ENCODE measurements at regions of chr15 and their contacts with region 1.

Region 1: DNA sequence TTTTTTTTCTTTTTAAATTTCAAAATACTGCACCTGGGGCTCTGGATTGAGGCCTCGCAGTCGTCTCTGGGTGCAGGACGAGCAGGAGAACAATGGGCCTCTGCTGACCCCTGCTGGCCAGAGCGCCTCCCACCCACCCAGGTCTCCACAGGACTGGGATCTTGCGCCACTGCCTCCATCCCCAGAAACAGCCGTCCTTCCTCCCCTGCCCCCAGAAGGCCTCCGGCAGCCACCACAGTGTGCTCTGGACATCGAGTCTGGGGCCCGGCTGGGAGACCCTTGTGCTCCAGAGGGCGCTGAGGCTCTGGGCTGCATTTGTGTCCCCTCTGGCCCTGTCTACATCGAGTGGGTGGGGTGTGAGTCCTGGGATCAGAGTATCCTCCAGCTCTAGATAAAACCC is 6.6 kb upstream of the ACSBG1 start:
- DNase-seq: peak; percentile 92
- H3K4me3 Mint-ChIP-seq: no peak overlapping the region
- H3K27ac Mint-ChIP-seq: no peak overlapping the region
- H3K4me1 Mint-ChIP-seq: no peaks in the 10 kb centered on the region
- H3K27me3 Mint-ChIP-seq: no peaks in the 10 kb centered on the region

Region 2: DNA sequence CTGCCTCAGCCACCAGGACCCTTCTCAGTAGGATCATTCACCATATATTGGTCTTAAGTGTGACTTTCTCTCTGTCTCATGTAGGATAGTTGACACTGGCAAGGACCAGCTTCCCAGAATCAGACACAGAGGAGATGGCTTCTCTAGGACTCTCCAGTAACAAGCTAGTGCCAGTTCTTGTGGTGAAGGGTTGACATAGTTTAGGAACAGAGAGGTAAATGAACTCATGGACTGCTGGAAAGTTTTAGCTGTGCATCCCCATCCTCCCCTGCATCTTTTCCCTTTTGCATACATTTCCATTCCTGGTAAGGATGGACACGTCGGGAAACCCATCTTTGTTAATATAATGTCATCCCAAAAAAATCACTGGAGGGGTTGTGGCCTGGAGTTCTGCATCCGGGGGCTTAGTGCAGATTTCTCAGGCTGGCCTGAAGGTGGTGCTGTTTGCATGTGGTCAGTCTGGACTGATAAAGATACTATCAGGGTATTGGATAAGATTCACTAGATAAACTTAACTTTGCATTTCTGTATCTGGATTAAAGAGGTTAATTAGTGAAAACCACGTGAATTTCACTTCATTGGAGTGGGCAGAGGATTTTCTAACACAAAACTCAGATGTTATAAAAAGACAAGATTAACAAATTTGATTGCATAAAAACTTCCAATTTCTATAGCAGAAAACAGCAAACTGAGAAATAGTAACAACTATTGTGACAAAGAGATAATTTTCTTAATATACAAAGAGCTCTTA is 274.3 kb before region 1 on chr15:
- CTCF ChIA-PET with region 1: interaction called, 15 read pairs
- intact Hi-C with region 1: no loop called
- DNase-seq: peak; percentile 76
- H3K4me3 Mint-ChIP-seq: no peak overlapping the region
- H3K27ac Mint-ChIP-seq: no peak overlapping the region
- H3K4me1 Mint-ChIP-seq: no peaks in the 10 kb centered on the region
- H3K27me3 Mint-ChIP-seq: no peaks in the 10 kb centered on the region

Region 3: GRCh38 chr15:78131295-78132061 is 109.5 kb before region 1 on chr15 and contains the start of gene CIB2:
- CTCF ChIA-PET with region 1: interaction called, 25 read pairs
- intact Hi-C with region 1: loop called (anchors 1 kb)
- DNase-seq: peak; percentile 73
- H3K4me3 Mint-ChIP-seq: peak within 1 kb of the TSS; percentile 81
- H3K27ac Mint-ChIP-seq: peak within 1 kb of the TSS; percentile 47
- H3K4me1 Mint-ChIP-seq: peaks cover 17% of the 10 kb centered on the region
- H3K27me3 Mint-ChIP-seq: no peaks in the 10 kb centered on the region
- total RNA-seq, gene CIB2: 1.9 to 2.1 TPM

Region 4: DNA sequence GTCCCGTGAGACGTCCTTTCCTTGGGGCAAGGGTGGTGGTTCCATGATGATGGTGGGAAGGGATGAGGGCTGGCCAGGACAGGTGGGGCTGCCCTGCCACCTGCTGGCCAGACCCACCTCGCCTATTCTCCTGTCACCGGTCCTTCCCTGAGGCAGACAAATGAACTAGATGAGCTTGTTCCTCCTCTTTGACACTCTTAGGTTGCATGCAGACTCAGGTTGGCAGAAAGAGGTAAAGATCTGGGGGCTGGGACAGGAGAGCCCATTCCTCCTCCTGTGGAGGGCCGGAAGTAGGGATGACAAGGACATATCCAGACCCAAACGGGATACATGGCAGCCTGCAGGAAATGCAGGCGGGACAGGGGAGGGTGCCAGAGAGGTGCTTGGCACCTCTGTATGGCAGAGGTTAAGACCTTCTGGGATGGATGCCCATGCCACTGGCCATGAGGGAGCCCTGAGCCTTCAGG is 45.2 kb before region 1 on chr15:
- CTCF ChIA-PET with region 1: interaction called, 41 read pairs
- intact Hi-C with region 1: loop called (anchors 2 kb)
- DNase-seq: peak; percentile 63
- H3K4me3 Mint-ChIP-seq: no peak overlapping the region
- H3K27ac Mint-ChIP-seq: no peak overlapping the region
- H3K4me1 Mint-ChIP-seq: no peaks in the 10 kb centered on the region
- H3K27me3 Mint-ChIP-seq: no peaks in the 10 kb centered on the region

Region 5: GRCh38 chr15:78228356-78228996 is 12.5 kb before region 1 on chr15:
- CTCF ChIA-PET with region 1: interaction called, 13 read pairs
- intact Hi-C with region 1: no loop called
- DNase-seq: no peak
- H3K4me3 Mint-ChIP-seq: no peak overlapping the region
- H3K27ac Mint-ChIP-seq: no peak overlapping the region
- H3K4me1 Mint-ChIP-seq: peaks cover 5% of the 10 kb centered on the region
- H3K27me3 Mint-ChIP-seq: no peaks in the 10 kb centered on the region

Region 6: GRCh38 chr15:78265752-78266593 is 25.0 kb after region 1 on chr15:
- CTCF ChIA-PET with region 1: interaction called, 10 read pairs
- intact Hi-C with region 1: no loop called
- DNase-seq: peak; percentile 31
- H3K4me3 Mint-ChIP-seq: peak overlapping the region; percentile 84
- H3K27ac Mint-ChIP-seq: peak overlapping the region; percentile 83
- H3K4me1 Mint-ChIP-seq: peaks cover 39% of the 10 kb centered on the region
- H3K27me3 Mint-ChIP-seq: no peaks in the 10 kb centered on the region

Region 7: DNA sequence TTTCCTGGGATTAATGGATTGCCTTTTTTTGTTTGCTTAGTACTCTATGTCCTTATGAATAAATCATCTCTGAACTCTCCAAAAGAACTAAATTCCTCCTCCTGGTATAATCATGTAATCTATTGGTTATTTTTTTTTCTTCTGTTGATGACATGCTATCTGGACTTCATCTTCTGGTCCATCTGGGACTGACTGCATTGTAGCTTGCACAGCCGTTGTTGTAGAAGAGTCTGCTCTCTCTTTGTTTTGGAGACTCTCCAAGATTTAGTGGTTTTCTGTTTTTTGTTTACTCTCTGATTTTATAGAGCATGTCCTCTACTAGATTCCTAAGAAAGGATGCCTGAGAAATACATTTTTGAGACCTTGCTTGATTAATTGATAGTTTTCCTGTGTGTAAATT is 216.1 kb after region 1 on chr15:
- CTCF ChIA-PET with region 1: no interaction called
- intact Hi-C with region 1: no loop called
- DNase-seq: no peak
- H3K4me3 Mint-ChIP-seq: no peak overlapping the region
- H3K27ac Mint-ChIP-seq: peak overlapping the region; percentile 44
- H3K4me1 Mint-ChIP-seq: peaks cover 84% of the 10 kb centered on the region
- H3K27me3 Mint-ChIP-seq: no peaks in the 10 kb centered on the region